BJ (cell line): ENCODE measurements at regions of chr6 and their contacts with region 1.

Region 1: GRCh38 chr6:107847844-107848802 is 24.0 kb upstream of the SCML4 start:
- DNase-seq: no peak
- H3K4me3 ChIP-seq: peak overlapping the region; percentile 51
- H3K27me3 ChIP-seq: peaks cover 7% of the 10 kb centered on the region
- CTCF ChIP-seq: peak; percentile 97

Region 2: DNA sequence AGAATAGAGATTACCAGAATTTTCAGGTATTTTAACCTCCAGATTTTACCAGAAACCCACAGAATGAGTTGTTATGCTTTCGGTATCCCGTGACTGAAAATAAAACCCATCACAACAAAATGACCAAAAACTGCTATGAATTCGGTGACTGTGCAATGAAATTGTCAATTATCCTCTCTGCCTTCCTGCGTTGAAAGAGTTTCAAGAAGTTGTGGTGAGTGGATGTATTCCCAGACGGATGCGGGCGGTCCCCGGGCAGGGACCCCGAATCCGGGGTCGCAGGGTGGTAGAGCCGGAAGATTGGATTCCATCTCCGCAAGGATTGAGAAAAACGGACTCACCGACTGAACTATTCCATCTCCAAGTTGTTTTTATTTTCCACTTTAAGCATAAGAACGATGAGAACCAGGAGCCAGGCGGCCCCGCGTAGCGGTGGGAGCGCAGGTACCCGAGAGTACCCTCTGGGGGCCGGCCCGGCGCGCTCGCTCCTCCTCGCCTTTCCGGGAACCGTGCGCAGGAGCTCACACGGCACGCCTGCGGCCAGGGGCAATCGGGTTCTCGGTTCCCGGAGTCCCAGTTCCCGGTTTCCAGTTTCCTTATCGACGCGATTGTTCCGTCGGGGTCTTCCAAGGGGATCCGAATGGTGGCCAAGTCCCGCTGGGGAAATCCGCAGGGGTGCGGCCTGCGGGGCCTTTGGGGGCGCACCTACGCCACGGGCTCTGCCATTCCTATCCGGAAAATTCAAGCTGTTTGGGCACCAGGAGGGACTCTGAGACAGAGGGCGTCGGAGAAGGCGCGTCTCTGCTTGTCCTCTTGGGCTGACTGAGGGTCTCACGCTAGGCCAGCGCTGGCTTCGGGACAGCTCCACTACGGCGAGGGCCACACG is 1866.9 kb before region 1 on chr6:
- CTCF ChIA-PET with region 1: no interaction called
- POLR2A ChIA-PET with region 1: no interaction called
- DNase-seq: no peak
- H3K4me3 ChIP-seq: no peak overlapping the region
- H3K27me3 ChIP-seq: no peaks in the 10 kb centered on the region
- CTCF ChIP-seq: no peak

Region 3: DNA sequence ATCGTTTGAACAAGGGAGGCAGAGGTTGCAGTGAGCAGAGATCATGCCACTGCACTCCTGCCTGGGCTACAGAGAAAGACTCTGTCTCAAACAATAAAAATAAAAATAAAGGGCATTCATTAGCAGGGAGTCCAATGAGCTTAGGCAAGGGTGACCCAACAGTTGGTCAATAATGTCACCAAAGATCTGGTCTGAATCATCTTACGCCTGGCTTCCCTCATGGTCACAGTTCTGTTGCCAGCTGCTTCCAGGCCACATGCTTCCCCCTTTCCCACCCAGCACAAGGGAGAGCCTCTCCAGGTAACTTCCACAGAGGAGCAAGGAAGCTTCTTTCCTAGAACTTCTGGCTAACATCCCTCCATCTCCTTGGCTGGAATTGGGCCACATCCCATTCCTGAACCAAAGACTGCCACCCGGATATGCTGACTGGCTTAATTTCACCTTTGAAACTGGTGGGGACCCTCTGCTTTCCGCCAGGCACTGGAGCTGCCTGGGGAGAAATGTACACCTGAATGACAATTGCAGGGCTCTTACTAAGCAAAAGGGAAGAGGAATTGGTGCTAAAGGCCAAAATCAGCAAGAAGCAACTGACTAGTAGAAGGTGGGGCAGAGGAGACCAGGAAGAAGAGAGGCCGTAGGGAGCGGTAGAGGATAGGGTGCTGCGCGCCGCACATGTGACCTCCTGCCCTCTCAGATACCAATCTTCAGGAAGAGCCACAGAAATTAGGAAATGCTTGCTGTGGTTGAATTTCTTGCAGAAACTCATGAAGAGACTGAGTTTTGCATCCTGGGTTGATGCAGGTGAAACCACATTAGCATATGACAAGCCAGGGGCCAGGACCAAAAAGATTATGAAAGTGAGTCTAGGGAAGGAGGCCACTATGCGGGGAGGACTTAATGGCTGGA is 15.7 kb before region 1 on chr6:
- CTCF ChIA-PET with region 1: interaction called, 27 read pairs
- POLR2A ChIA-PET with region 1: no interaction called
- DNase-seq: no peak
- H3K4me3 ChIP-seq: no peak overlapping the region
- H3K27me3 ChIP-seq: peaks cover 3% of the 10 kb centered on the region; the same call in 1 of the 2 replicates
- CTCF ChIP-seq: no peak

Region 4: GRCh38 chr6:107866606-107867301 is 18.6 kb after region 1 on chr6:
- CTCF ChIA-PET with region 1: interaction called, 14 read pairs
- POLR2A ChIA-PET with region 1: no interaction called
- DNase-seq: no peak
- H3K4me3 ChIP-seq: no peak overlapping the region
- H3K27me3 ChIP-seq: no peaks in the 10 kb centered on the region
- CTCF ChIP-seq: peak; percentile 54

Region 5: DNA sequence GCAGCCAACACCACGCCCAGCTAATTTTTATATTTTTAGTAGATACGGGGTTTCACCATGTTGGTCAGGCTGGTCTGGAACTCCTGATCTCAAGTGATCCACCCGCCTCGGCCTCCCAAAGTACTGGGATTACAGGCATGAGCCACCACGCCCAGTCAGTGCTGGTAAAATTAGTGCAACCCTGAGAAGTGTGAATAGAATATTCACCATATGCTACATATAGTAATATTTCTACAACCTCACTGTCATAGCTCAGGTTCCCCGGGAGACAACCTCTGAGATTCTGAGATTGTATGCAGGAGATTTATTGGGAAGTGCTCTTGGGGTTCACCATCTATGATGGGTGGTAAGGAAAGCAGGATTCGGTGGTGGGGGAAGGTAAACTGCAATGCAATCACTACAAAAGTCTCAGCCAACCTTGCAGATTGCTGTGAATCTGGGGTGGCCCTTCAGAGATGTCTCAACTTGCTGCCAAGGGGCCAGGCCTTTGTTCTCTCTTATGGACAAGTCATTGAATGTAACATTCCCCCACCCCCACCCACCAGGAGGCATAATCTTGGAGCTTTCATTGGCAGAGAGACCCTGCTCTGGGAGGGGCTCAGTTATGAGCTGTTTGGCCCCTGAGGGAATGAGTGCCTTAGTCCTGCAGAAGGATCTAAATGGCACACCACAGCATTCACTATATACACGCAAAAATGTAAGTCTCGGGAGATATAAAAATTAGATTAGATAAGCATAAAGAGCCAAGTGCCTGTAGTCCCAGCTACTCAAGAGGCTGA is 143.8 kb after region 1 on chr6:
- CTCF ChIA-PET with region 1: no interaction called
- POLR2A ChIA-PET with region 1: no interaction called
- DNase-seq: no peak
- H3K4me3 ChIP-seq: no peak overlapping the region
- H3K27me3 ChIP-seq: no peaks in the 10 kb centered on the region; the same call in 1 of the 2 replicates
- CTCF ChIP-seq: no peak